Right ventricle myocardium superior (tissue), 1 donor: ENCODE measurements at regions of chr22 and their contacts with region 1.

Region 1: GRCh38 chr22:19629720-19630419 is 84.4 kb upstream of the SEPTIN5 start:
- DNase-seq: peak; percentile 82
- ATAC-seq: peak; percentile 92

Region 2: GRCh38 chr22:19143967-19144400 is 485.9 kb before region 1 on chr22:
- intact Hi-C with region 1: loop called (anchors 10 kb)
- DNase-seq: no peak
- ATAC-seq: no peak

Region 3: DNA sequence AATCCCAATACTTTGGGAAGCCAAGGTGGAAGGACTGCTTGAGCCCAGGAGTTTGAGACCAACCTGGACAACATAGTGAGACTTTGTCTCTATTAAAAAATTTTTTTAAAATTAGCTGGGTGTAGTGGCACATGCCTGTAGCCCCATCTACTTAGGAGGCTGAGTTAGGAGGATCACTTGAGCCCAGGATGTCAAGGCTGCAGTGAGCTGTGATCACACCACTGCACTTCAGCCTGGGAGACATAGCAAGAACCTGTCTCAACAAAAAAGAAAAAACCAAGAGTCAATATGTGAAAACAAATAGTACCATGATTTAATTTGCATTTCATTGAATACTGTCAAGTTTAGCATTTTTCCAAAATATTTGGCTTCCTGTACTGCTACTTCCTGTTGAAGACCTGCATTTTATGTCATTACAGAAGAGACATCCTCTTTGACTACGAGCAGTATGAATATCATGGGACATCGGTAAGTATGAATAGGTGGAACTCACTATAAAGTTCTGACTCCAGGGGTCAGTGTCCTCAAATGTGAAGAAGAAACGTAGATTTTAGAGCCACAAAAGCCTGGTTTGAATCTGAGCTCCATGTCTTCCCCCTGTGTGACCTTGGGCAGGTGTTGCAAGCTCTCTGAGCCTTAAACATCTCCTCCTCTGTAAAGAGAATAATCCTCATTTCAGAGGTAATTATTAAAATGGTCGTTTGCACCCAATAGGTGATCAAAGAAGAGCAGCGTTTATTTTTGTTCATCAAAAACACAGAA is 134.1 kb before region 1 on chr22:
- intact Hi-C with region 1: loop called (anchors 2 kb)
- DNase-seq: no peak
- ATAC-seq: no peak